PC-9 (cell line): ENCODE measurements at regions of chr12 and their contacts with region 1.

Region 1: GRCh38 chr12:22409377-22410164 is 75.1 kb upstream of the ST8SIA1 start:
- DNase-seq: no peak
- H3K4me3 ChIP-seq: no peak overlapping the region
- H3K27ac ChIP-seq: peak overlapping the region; percentile 84
- H3K4me1 ChIP-seq: peaks cover 46% of the 10 kb centered on the region
- H3K27me3 ChIP-seq: no peaks in the 10 kb centered on the region
- CTCF ChIP-seq: no peak

Region 2: GRCh38 chr12:21613931-21614330 is 795.6 kb before region 1 on chr12:
- CTCF ChIA-PET with region 1: no interaction called
- POLR2A ChIA-PET with region 1: no interaction called
- intact Hi-C with region 1: no loop called
- DNase-seq: no peak
- H3K4me3 ChIP-seq: no peak overlapping the region
- H3K27ac ChIP-seq: no peak overlapping the region
- H3K4me1 ChIP-seq: no peaks in the 10 kb centered on the region
- H3K27me3 ChIP-seq: no peaks in the 10 kb centered on the region
- CTCF ChIP-seq: no peak

Region 3: GRCh38 chr12:22083167-22083566 is 326.4 kb before region 1 on chr12:
- CTCF ChIA-PET with region 1: interaction called, 10 read pairs
- POLR2A ChIA-PET with region 1: no interaction called
- intact Hi-C with region 1: no loop called
- DNase-seq: peak in 1 of 2 experiments; percentile 17
- H3K4me3 ChIP-seq: no peak overlapping the region
- H3K27ac ChIP-seq: no peak overlapping the region
- H3K4me1 ChIP-seq: no peaks in the 10 kb centered on the region
- H3K27me3 ChIP-seq: no peaks in the 10 kb centered on the region
- CTCF ChIP-seq: peak; percentile 80

Region 4: DNA sequence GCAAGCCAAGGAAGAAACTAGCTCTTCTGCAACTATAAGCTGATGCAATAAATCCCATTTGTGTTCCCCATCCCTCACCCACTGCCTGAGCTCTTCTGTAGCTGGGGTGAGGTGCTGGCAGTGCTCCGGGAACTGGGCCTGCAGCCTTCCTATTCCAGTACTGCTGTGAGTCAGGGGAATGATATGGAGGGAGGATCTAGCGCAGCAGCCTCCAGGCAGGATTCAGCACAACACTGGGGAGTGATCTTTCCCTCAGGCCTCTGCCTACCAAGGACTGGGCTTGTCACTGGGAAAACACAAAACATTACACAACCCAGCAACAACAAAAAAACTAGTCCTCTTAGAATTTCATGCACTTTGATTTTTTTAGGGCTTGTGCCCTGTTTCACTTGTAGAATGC is 133.7 kb before region 1 on chr12:
- CTCF ChIA-PET with region 1: no interaction called
- POLR2A ChIA-PET with region 1: no interaction called
- intact Hi-C with region 1: loop called (anchors 10 kb)
- DNase-seq: peak; percentile 95 to 97
- H3K4me3 ChIP-seq: no peak overlapping the region; the same call in 1 of the 2 replicates
- H3K27ac ChIP-seq: peak overlapping the region; percentile 93
- H3K4me1 ChIP-seq: peaks cover 35% of the 10 kb centered on the region
- H3K27me3 ChIP-seq: no peaks in the 10 kb centered on the region
- CTCF ChIP-seq: no peak

Region 5: GRCh38 chr12:22380031-22380430 is 29.5 kb before region 1 on chr12:
- CTCF ChIA-PET with region 1: no interaction called
- POLR2A ChIA-PET with region 1: no interaction called
- intact Hi-C with region 1: no loop called
- DNase-seq: no peak
- H3K4me3 ChIP-seq: no peak overlapping the region
- H3K27ac ChIP-seq: no peak overlapping the region
- H3K4me1 ChIP-seq: peaks cover 28% of the 10 kb centered on the region
- H3K27me3 ChIP-seq: no peaks in the 10 kb centered on the region
- CTCF ChIP-seq: no peak

Region 6: GRCh38 chr12:22437031-22437780 is 27.6 kb after region 1 on chr12:
- CTCF ChIA-PET with region 1: no interaction called
- POLR2A ChIA-PET with region 1: interaction called, 4 read pairs
- intact Hi-C with region 1: loop called (anchors 1 kb)
- DNase-seq: peak; percentile 86 to 93
- H3K4me3 ChIP-seq: peak overlapping the region; percentile 57; the same call in 1 of the 2 replicates
- H3K27ac ChIP-seq: peak overlapping the region; percentile 97
- H3K4me1 ChIP-seq: peaks cover 42% of the 10 kb centered on the region
- H3K27me3 ChIP-seq: no peaks in the 10 kb centered on the region
- CTCF ChIP-seq: no peak

Region 7: GRCh38 chr12:22443379-22444316 is 34.1 kb after region 1 on chr12:
- CTCF ChIA-PET with region 1: no interaction called
- POLR2A ChIA-PET with region 1: interaction called, 14 read pairs
- intact Hi-C with region 1: no loop called
- DNase-seq: peak; percentile 57 to 75
- H3K4me3 ChIP-seq: no peak overlapping the region
- H3K27ac ChIP-seq: no peak overlapping the region
- H3K4me1 ChIP-seq: no peaks in the 10 kb centered on the region; the same call in 1 of the 2 replicates
- H3K27me3 ChIP-seq: no peaks in the 10 kb centered on the region
- CTCF ChIP-seq: peak; percentile 87